ENCODE measurements at regions of chr4 and their contacts with region 1.

Region 1: DNA sequence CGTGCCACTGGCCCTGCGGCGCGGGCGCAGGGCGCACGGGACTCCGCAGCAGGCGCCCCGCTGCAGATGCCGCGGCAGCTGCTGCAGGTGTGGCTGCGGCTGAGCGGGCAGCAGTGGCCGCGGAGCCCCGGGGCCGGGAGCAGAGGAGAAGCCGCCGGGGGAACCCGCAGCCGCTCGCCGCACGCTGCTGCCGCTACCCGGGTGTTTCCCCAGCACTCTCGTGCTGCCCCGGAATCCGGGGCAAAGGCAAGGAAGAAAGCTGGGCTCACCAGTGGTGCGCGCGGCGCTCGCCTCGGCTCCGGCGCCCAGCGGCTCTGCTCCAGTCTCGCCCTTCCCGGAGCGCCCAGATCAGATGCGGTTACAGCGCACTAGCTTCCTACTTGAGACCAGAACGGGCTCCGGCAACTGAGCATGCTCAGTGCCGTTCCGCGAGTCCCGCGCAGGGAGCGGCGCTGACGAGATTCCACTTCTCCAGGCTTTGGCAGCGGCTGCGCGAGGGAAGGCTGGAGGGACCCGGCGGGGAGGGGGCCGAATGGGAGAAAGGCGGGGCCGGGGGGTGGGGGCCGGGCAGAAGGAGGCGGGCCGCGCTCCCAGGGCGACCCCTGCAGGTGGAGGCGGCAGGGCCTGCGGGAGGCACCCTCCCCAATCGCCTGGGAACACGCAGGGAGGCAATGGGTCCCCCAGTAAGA is at the start of gene APBB2:
- H3K4me3 Mint-ChIP-seq: peak within 1 kb of the TSS; percentile 88
- H3K27ac Mint-ChIP-seq: peak within 1 kb of the TSS; percentile 70
- H3K4me1 Mint-ChIP-seq: peaks cover 40% of the 10 kb centered on the region
- H3K27me3 Mint-ChIP-seq: peaks cover 64% of the 10 kb centered on the region

Region 2: GRCh38 chr4:40924096-40924792 is 290.0 kb before region 1 on chr4:
- intact Hi-C with region 1: loop called (anchors 1 kb)
- H3K4me3 Mint-ChIP-seq: no peak overlapping the region
- H3K27ac Mint-ChIP-seq: no peak overlapping the region
- H3K4me1 Mint-ChIP-seq: peaks cover 5% of the 10 kb centered on the region
- H3K27me3 Mint-ChIP-seq: peaks cover 1% of the 10 kb centered on the region

Region 3: DNA sequence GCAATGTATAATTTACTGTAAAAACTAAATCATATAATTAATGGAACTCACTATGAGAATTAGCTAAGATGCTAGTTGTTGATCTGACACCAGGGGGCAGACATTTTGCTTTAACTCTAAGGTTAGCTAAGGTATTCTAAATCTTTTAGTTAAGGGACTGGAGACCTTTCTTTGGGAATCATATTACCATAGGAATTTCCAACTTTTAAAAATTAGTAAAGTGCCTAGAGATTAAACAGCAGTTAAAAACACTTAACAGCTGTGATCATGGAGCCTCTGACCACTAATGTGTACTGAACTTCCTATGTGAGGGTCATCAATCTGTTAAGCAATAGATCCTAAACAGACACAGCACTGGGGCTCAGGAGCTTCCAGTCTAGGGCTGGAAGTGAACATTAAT is 237.9 kb before region 1 on chr4:
- intact Hi-C with region 1: loop called (anchors 2 kb)
- H3K4me3 Mint-ChIP-seq: no peak overlapping the region
- H3K27ac Mint-ChIP-seq: no peak overlapping the region
- H3K4me1 Mint-ChIP-seq: no peaks in the 10 kb centered on the region
- H3K27me3 Mint-ChIP-seq: no peaks in the 10 kb centered on the region

Measured in dendritic cell treated with granulocyte-macrophage colony-stimulating factor and Interleukin-4, amounts not matched to agents 40 ng/mL and 50 ng/mL, for 4 days (primary cell).